HAP-1 (cell line): ENCODE measurements at regions of chr7 and their contacts with region 1.

Region 1: GRCh38 chr7:70856866-70857630 is 274.9 kb upstream of the GALNT17 start:
- DNase-seq: peak; percentile 16 to 84
- H3K4me3 ChIP-seq: no peak overlapping the region
- H3K4me1 ChIP-seq: no peaks in the 10 kb centered on the region
- H3K27me3 ChIP-seq: no peaks in the 10 kb centered on the region

Region 2: GRCh38 chr7:71735961-71736556 is 879.0 kb after region 1 on chr7:
- in situ Hi-C with region 1: loop called (anchors 5 kb)
- DNase-seq: peak; percentile 39 to 67
- H3K4me3 ChIP-seq: no peak overlapping the region
- H3K4me1 ChIP-seq: no peaks in the 10 kb centered on the region
- H3K27me3 ChIP-seq: no peaks in the 10 kb centered on the region

Region 3: DNA sequence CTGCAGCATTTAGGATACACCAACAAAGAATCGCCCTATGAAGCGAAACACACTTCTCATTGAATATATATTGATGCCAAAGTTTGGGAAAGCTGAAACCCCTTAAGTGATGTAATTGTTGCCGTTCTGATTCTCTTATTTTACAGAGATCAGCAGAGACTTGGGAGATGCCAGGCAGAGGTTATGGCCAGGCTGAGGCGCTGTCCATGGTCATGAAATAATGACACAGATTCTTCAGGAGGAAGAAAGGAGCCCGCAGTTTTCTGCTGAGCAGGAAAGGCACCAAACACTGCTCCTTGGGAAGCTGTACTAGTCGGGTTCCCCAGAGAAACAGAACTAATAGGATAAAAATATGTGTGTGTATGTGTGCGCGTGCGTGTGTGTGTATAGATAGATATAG is 989.1 kb after region 1 on chr7:
- in situ Hi-C with region 1: no loop called
- DNase-seq: no peak
- H3K4me3 ChIP-seq: no peak overlapping the region
- H3K4me1 ChIP-seq: no peaks in the 10 kb centered on the region
- H3K27me3 ChIP-seq: no peaks in the 10 kb centered on the region